Natural killer cell (primary cell): ENCODE measurements at regions of chr1 and their contacts with region 1.

Region 1: GRCh38 chr1:41751804-41752513 is 166.8 kb downstream of the HIVEP3 start:
- DNase-seq: peak in 1 of 2 donors; percentile 19
- ATAC-seq: peak; percentile 37 to 76 (median 38)
- H3K4me3 ChIP-seq: no peak overlapping the region
- H3K4me3 Mint-ChIP-seq: peak overlapping the region; percentile 13
- H3K27ac ChIP-seq: peak overlapping the region; percentile 69
- H3K27ac Mint-ChIP-seq: peak overlapping the region; percentile 38 to 42
- H3K4me1 ChIP-seq: peaks cover 55% of the 10 kb centered on the region
- H3K4me1 Mint-ChIP-seq: peaks cover 46 to 54% of the 10 kb centered on the region in 2 donors
- H3K27me3 ChIP-seq: no peaks in the 10 kb centered on the region
- H3K27me3 Mint-ChIP-seq: no peaks in the 10 kb centered on the region
- CTCF ChIP-seq: no peak

Region 2: GRCh38 chr1:41484372-41485241 is 267.4 kb before region 1 on chr1 and contains the start of gene EDN2:
- intact Hi-C with region 1: no loop called
- DNase-seq: no peak
- ATAC-seq: no peak
- H3K4me3 ChIP-seq: no peak within 1 kb of the TSS
- H3K4me3 Mint-ChIP-seq: no peak within 1 kb of the TSS
- H3K27ac ChIP-seq: no peak within 1 kb of the TSS
- H3K27ac Mint-ChIP-seq: no peak within 1 kb of the TSS
- H3K4me1 ChIP-seq: no peaks in the 10 kb centered on the region
- H3K4me1 Mint-ChIP-seq: peaks cover 0 to 7% of the 10 kb centered on the region in 2 donors
- H3K27me3 ChIP-seq: peaks cover 2% of the 10 kb centered on the region
- H3K27me3 Mint-ChIP-seq: peaks cover 18 to 25% of the 10 kb centered on the region in 2 donors
- CTCF ChIP-seq: no peak
- total RNA-seq, gene EDN2: 0.29 to 0.93 (median 0.64) TPM

Region 3: DNA sequence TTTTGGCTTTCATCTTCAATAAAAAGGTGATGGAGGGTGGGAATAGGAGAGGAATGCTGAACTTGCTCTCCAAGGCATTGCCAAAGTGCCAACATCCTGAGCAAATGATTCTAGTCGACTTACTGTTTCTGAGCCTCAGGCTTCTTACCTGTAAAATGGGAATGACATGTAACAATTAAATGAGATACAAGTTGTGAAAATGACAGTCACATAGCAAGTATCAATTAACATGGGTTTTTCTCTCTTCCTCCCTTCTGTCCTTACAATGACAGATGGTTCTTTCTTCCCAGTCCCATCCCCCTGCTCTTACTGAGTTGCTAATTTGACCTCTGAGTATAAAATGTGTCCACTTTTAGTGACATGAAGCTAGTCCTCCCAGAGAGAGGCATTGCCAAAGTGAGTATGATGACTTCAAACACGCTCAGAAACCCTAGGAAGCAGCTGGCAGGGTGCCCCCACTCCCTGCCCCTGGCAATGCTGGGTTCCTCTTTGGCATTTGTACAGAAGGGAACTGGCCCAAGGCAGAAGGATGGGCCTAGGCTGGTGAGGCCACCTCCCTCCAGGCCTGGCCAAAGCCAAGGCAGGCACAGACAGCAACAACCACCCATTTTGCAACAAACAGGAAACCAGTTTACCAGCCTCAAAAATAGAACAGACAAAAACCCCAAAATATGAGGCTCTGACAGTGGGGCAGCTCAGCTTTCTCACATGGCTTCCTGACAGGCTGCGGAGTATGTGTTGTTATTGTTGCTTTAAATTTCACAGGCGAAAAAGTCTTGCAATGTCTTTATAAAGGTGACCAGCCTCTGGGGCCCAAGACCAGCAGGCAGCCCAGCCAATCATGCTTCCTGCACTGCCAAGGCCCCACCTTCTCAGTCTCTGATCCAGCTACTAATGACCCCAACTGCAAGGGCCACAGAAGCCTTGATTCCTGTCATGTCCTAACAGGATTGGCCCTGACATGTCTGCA is 50.9 kb after region 1 on chr1:
- intact Hi-C with region 1: loop called (anchors 5 kb)
- DNase-seq: peak; percentile 31 to 71
- ATAC-seq: peak; percentile 65 to 86 (median 83)
- H3K4me3 ChIP-seq: no peak overlapping the region
- H3K4me3 Mint-ChIP-seq: peak overlapping the region; percentile 85
- H3K27ac ChIP-seq: peak overlapping the region; percentile 89
- H3K27ac Mint-ChIP-seq: peak overlapping the region; percentile 91 to 99
- H3K4me1 ChIP-seq: peaks cover 89% of the 10 kb centered on the region
- H3K4me1 Mint-ChIP-seq: peaks cover 81 to 87% of the 10 kb centered on the region in 2 donors
- H3K27me3 ChIP-seq: no peaks in the 10 kb centered on the region
- H3K27me3 Mint-ChIP-seq: no peaks in the 10 kb centered on the region
- CTCF ChIP-seq: no peak